ENCODE measurements at regions of chr1 and their contacts with region 1.

Region 1: GRCh38 chr1:42747125-42747524 is 7.1 kb upstream of the CLDN19 start:
- DNase-seq: peak in 1 of 4 donors; percentile 65
- ATAC-seq: peak; percentile 68
- H3K4me3 ChIP-seq: no peak overlapping the region
- H3K27ac ChIP-seq: no peak overlapping the region
- H3K4me1 ChIP-seq: peaks cover 0 to 5% of the 10 kb centered on the region in 2 donors
- H3K27me3 ChIP-seq: no peaks in the 10 kb centered on the region
- CTCF ChIP-seq: peak; percentile 43 to 47

Region 2: GRCh38 chr1:42576935-42577334 is 170.2 kb before region 1 on chr1:
- intact Hi-C with region 1: loop called in 1 of 2 experiments (anchors 5 kb)
- DNase-seq: no peak
- ATAC-seq: no peak
- H3K4me3 ChIP-seq: no peak overlapping the region
- H3K27ac ChIP-seq: no peak overlapping the region
- H3K4me1 ChIP-seq: no peaks in the 10 kb centered on the region
- H3K27me3 ChIP-seq: no peaks in the 10 kb centered on the region
- CTCF ChIP-seq: no peak

Region 3: DNA sequence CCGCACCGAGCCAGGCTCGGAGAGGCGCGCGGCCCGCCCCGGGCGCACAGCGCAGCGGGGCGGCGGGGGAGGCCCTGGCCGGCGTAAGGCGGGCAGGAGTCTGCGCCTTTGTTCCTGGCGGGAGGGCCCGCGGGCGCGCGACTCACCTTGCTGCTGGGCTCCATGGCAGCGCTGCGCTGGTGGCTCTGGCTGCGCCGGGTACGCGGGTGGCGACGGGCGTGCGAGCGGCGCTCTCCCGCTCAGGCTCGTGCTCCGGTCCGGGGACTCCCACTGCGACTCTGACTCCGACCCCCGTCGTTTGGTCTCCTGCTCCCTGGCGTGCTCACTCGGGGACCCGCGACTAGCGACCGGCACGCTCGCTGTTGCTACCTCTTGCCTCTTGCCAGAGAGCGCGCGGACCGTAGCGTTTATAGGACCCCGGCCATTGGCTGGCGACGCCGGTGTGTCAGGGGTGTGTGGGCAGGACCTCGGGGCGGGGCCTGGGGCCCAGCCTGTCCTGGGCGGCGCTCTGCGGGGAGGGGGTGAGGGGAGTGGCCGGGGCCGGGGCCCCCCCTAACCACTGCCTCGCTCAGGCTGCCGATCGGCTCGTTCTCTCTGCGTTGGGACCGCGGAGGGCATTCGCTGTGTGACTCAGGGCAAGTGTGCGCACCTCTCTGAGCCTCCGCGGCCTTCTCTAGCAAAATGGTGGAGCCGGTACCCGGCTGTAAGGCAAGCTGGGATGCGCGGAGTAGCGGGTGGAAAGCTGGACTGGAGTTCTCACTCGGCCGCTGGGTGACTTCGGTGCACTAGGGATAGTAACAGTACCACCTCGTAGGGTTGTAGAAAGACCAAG is 211.6 kb after region 1 on chr1 and contains the start of gene SLC2A1:
- intact Hi-C with region 1: no loop called
- DNase-seq: peak; percentile 84 to 95 (median 94)
- ATAC-seq: peak; percentile 97
- H3K4me3 ChIP-seq: peak within 1 kb of the TSS; percentile 75 to 85
- H3K27ac ChIP-seq: peak within 1 kb of the TSS; percentile 73
- H3K4me1 ChIP-seq: peaks cover 4 to 36% of the 10 kb centered on the region in 2 donors
- H3K27me3 ChIP-seq: peaks cover 0 to 65% of the 10 kb centered on the region in 2 donors
- CTCF ChIP-seq: no peak
- polyA plus RNA-seq, gene SLC2A1: 40.3 to 109 (median 59.3) TPM

Measured in left lung (tissue), 14 donors.